HEK293T (cell line): ENCODE measurements at regions of chr11 and their contacts with region 1.

Region 1: GRCh38 chr11:10792398-10792975 is 16.2 kb downstream of the EIF4G2 start:
- DNase-seq: peak; percentile 90

Region 2: DNA sequence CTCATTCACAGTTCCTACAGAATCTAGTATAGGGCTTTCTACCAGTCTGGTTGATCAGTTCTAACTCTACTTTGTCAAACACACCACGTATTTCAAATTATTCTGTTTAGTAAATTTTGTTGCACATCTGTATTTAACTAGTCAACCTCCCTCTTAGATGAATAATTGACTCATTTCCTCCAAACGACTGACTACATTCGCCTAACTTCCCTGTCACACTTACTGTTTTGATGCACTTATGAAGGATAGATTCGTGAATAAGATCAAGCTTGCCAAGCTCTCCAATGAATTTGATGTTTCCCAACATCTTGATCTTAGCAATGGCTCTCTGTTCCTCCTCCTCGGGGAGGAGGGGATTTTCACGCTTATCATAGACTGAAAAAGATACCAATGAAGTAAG is 11.2 kb after region 1 on chr11:
- CTCF ChIA-PET with region 1: interaction called, 12 read pairs
- POLR2A ChIA-PET with region 1: interaction called, 63 read pairs
- DNase-seq: no peak